Heart left ventricle (tissue), 16 donors: ENCODE measurements at regions of chr7 and their contacts with region 1.

Region 1: GRCh38 chr7:141072548-141073172 is 1.2 kb upstream of the TMEM178B start:
- DNase-seq: peak; percentile 46 to 77 (median 66)
- ATAC-seq: peak; percentile 63 to 85 (median 80)
- H3K4me3 ChIP-seq: peak overlapping the region; percentile 46 to 67 (median 58)
- H3K27ac ChIP-seq: peak overlapping the region in 5 of 12 donors; percentile 12 to 61 (median 54)
- H3K4me1 ChIP-seq: peaks cover 0 to 42% (median 20%) of the 10 kb centered on the region in 12 donors
- H3K27me3 ChIP-seq: peaks cover 0 to 77% (median 8%) of the 10 kb centered on the region in 9 donors
- CTCF ChIP-seq: peak in 1 of 12 donors; percentile 8
- POLR2A ChIP-seq: no peak

Region 2: GRCh38 chr7:139660317-139661042 is 1412.2 kb before region 1 on chr7:
- intact Hi-C with region 1: no loop called
- DNase-seq: no peak
- ATAC-seq: peak; percentile 10 to 58 (median 21)
- H3K4me3 ChIP-seq: no peak overlapping the region
- H3K27ac ChIP-seq: peak overlapping the region in 11 of 12 donors; percentile 27 to 83 (median 60)
- H3K4me1 ChIP-seq: peaks cover 21 to 97% (median 72%) of the 10 kb centered on the region in 12 donors
- H3K27me3 ChIP-seq: no peaks in the 10 kb centered on the region
- CTCF ChIP-seq: no peak
- POLR2A ChIP-seq: no peak

Region 3: DNA sequence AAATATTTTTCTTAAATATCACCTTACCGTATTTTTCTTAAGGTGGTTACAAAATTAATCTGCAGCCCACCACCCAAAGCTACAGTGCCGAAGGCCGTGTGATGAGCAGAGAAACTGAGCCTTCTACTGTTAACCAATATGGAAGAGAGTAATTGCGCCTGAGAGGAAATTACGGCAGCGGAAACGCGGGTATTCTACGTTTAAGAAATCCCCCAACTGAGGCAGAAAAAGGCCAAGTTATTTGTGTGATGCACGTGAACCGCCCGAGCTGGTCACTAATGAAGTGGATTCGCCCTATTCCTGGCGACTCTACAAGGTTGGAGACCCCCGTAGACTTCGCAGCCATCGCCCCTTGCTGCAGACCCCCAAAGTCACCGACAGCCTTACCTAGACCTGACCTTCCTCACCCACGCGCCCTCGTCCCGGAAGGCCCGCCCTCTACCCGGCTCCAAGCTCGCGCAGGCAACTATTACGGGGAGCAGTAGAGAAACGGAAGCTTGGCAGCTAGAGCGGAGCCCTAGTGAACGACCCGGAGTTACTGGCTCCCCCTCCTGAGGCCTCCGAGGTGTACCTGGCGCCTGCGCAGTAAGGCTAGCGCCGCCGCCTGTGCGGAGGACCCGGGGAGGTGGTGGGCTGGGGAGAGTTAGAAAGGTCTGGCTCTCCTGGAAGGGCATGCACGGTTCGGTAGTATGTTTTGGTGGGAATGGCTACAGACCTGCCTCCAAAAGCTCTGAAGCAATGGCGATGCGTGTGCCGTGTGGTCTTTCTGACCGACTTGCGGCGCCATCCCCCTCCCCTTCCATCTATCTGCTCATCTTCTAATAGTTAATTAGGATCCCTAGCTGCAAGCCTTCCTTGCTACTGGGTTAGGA is 57.9 kb before region 1 on chr7 and contains the start of gene MRPS33:
- intact Hi-C with region 1: no loop called
- DNase-seq: peak; percentile 95 to 98 (median 97)
- ATAC-seq: peak; percentile 99 to 100 (median 100)
- H3K4me3 ChIP-seq: peak within 1 kb of the TSS; percentile 47 to 87 (median 66)
- H3K27ac ChIP-seq: peak within 1 kb of the TSS; percentile 21 to 96 (median 90)
- H3K4me1 ChIP-seq: peaks cover 0 to 19% (median 12%) of the 10 kb centered on the region in 12 donors
- H3K27me3 ChIP-seq: peaks cover 0 to 5% (median 0%) of the 10 kb centered on the region in 9 donors
- CTCF ChIP-seq: peak in 10 of 12 donors; percentile 13 to 80 (median 52)
- POLR2A ChIP-seq: peak in 1 of 2 donors; percentile 64
- total RNA-seq, gene MRPS33: 43.7 to 137 (median 105) TPM

Region 4: GRCh38 chr7:141144921-141145629 is 72.4 kb after region 1 on chr7:
- intact Hi-C with region 1: no loop called
- DNase-seq: no peak
- ATAC-seq: no peak
- H3K4me3 ChIP-seq: no peak overlapping the region
- H3K27ac ChIP-seq: no peak overlapping the region
- H3K4me1 ChIP-seq: no peaks in the 10 kb centered on the region
- H3K27me3 ChIP-seq: no peaks in the 10 kb centered on the region
- CTCF ChIP-seq: no peak
- POLR2A ChIP-seq: no peak

Region 5: DNA sequence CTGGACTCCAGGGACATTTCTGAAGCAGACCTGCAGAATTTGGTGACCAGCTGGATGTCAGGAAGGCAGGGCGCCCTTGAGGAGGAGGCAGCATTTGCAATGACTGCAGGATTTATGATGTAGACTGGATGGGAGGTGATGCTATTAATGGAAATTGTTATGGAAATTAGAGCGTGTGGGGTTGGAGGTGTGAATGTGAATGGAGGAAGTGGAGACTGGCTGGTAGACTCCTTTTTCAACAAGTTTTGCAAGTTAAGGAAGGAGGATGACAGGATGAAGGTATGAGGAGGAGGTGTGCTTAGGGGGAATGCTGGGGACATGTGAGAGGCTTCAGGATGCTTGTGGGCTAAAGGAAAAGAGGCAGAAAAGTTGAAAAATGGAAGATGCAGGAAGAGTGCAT is 138.2 kb after region 1 on chr7:
- intact Hi-C with region 1: loop called in 2 of 10 experiments (anchors 10 kb)
- DNase-seq: no peak
- ATAC-seq: no peak
- H3K4me3 ChIP-seq: no peak overlapping the region
- H3K27ac ChIP-seq: no peak overlapping the region
- H3K4me1 ChIP-seq: peaks cover 0 to 13% (median 0%) of the 10 kb centered on the region in 12 donors
- H3K27me3 ChIP-seq: no peaks in the 10 kb centered on the region
- CTCF ChIP-seq: no peak
- POLR2A ChIP-seq: no peak

Region 6: DNA sequence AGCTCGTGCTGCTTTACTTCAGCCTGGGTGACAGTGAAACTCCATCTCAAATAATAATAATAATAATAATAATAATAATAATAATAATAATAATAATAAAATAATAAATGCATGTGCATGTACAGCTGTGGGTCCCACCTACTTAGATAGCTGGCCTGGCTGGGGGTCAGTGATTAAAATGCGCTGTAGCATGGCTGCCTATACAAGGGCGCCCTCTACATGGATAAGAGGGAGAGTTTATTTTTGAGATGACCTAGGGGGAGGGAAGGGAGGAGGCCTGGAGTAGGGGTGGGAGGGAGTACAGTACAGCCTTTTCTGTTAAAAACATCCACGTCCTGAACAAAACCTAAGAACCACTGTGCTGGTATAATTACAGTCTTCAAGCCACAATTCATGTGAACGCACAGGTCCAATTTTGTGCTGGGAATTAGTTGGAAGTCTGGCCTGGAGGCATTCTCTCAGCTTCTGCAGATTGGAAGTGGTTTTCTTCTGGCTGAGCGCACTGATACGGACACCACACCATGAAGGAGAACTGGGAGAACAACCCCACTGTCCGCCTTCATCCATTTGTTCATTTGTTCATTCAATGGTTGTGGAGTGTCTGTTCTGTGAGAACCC is 147.7 kb after region 1 on chr7:
- intact Hi-C with region 1: loop called in 5 of 10 experiments (anchors 10 kb)
- DNase-seq: no peak
- ATAC-seq: no peak
- H3K4me3 ChIP-seq: no peak overlapping the region
- H3K27ac ChIP-seq: no peak overlapping the region
- H3K4me1 ChIP-seq: no peaks in the 10 kb centered on the region
- H3K27me3 ChIP-seq: no peaks in the 10 kb centered on the region
- CTCF ChIP-seq: peak in 5 of 12 donors; percentile 12 to 34 (median 20)
- POLR2A ChIP-seq: no peak

Region 7: GRCh38 chr7:141231018-141231792 is 158.5 kb after region 1 on chr7:
- intact Hi-C with region 1: loop called in 4 of 10 experiments (anchors 10 kb)
- DNase-seq: peak in 3 of 5 donors; percentile 25 to 47 (median 29)
- ATAC-seq: peak; percentile 61 to 86 (median 78)
- H3K4me3 ChIP-seq: no peak overlapping the region
- H3K27ac ChIP-seq: no peak overlapping the region
- H3K4me1 ChIP-seq: peaks cover 0 to 6% (median 0%) of the 10 kb centered on the region in 12 donors
- H3K27me3 ChIP-seq: no peaks in the 10 kb centered on the region
- CTCF ChIP-seq: peak in 11 of 12 donors; percentile 9 to 57 (median 31)
- POLR2A ChIP-seq: no peak

Region 8: DNA sequence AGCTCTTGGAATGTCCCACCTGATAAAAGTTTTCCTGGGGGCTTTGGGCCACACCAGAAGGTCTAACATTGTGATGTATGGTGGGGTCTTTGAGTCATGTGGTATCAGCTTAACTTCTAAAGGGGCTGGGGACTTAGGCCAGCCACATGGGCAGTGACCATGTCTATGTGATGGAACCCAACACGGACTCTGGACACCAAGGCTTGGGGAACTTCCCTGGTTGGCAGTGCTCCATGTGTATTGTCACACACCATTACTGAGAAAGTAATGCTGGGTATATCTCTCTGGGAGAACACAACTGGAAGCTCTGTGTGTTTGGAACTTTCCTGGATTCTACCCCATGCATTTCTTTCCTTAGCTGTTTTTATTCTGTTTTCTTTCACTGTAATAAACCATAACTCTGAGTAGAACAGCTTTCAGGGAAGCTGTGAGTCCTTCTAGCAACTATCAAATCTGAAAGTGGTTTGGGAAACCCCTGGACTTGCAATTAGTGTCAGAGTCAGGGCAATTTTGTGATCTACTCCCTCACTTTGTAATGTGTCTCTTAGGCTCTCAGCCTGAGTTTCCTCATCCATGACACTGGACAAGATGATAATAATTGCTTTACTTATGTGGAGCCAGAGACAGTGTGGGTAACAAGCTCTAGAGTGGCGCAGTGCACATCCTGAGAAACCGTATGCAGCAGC is 450.1 kb after region 1 on chr7:
- intact Hi-C with region 1: loop called in 1 of 10 experiments (anchors 5 kb)
- DNase-seq: no peak
- ATAC-seq: no peak
- H3K4me3 ChIP-seq: no peak overlapping the region
- H3K27ac ChIP-seq: no peak overlapping the region
- H3K4me1 ChIP-seq: no peaks in the 10 kb centered on the region
- H3K27me3 ChIP-seq: no peaks in the 10 kb centered on the region
- CTCF ChIP-seq: no peak
- POLR2A ChIP-seq: no peak